ENCODE measurements at regions of chr2 and their contacts with region 1.

Region 1: DNA sequence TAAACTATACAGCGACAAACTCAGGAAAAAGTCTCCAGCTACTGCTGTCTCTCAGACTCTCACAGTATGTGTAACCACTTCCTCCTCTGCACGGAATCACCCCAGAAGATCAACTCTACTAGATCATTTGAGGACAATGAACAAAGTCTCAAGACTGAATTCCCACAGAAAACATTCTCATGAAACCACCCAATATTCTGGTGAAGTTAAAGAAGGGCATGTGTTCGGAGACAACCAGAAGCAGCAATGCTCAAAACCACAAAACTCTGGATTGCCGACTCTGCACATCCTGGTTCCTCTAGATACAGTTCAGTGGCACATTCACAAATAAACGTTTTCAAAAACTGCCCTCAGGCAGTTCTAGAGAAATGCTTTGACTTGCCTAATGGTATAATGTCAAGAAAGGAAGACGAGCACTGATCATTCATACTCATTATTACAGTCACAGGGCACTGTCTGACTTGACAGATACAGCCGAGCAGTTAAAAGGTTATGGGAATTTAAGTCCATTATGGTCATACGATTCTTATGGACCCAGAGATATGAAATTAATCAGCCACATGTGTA is 91.9 kb upstream of the STK17B start:
- DNase-seq: peak; percentile 57
- H3K4me3 Mint-ChIP-seq: peak overlapping the region; percentile 65
- H3K27ac Mint-ChIP-seq: peak overlapping the region; percentile 88
- H3K4me1 Mint-ChIP-seq: peaks cover 79% of the 10 kb centered on the region
- H3K27me3 Mint-ChIP-seq: no peaks in the 10 kb centered on the region

Region 2: DNA sequence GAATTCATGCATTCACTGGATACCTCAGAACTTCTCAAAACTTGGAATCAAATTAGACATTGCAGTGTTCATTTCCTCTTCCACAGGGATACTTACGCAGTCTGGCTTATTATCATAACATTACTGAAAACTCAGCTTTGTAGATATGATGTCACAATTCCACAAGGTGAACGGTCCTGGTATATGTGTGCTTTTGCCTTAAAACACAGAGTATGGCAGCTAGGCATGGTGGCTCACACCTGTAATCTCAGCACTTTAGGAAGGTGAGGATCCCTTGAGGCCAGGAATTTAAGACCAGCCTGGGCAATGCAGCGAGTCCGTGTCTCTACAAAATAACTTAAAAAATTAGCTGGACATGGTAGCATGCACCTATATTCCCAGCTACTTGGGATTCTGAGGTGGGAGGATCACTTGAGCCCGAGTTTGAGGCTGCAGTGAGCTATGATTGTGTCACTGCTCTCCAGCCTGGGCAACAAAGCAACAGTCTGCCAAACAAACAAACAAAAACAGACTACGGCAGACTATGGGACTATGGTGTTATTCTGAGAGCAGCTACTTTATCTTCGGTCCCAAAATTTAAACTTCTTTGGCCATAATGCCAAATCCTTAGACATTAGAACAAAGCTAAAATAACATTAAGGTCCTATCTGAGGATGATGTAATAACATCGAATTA is 1798.2 kb before region 1 on chr2:
- intact Hi-C with region 1: loop called (anchors 10 kb)
- DNase-seq: no peak
- H3K4me3 Mint-ChIP-seq: no peak overlapping the region
- H3K27ac Mint-ChIP-seq: no peak overlapping the region
- H3K4me1 Mint-ChIP-seq: no peaks in the 10 kb centered on the region
- H3K27me3 Mint-ChIP-seq: no peaks in the 10 kb centered on the region

Region 3: GRCh38 chr2:196249860-196250259 is 13.4 kb before region 1 on chr2:
- intact Hi-C with region 1: loop called (anchors 1 kb)
- DNase-seq: no peak
- H3K4me3 Mint-ChIP-seq: no peak overlapping the region
- H3K27ac Mint-ChIP-seq: peak overlapping the region; percentile 28
- H3K4me1 Mint-ChIP-seq: peaks cover 76% of the 10 kb centered on the region
- H3K27me3 Mint-ChIP-seq: no peaks in the 10 kb centered on the region